ENCODE measurements at regions of chr2 and their contacts with region 1.

Region 1: GRCh38 chr2:119366649-119367471 is at the starts of genes C2orf76 and DBI:
- DNase-seq: peak; percentile 97 to 98 (median 98)
- ATAC-seq: peak; percentile 99
- H3K4me3 ChIP-seq: peak within 1 kb of the TSS; percentile 75
- H3K27ac ChIP-seq: peak within 1 kb of the TSS; percentile 80
- H3K4me1 ChIP-seq: peaks cover 3 to 14% of the 10 kb centered on the region in 2 experiments; a peak in 4 of 5 replicates
- H3K27me3 ChIP-seq: no peaks in the 10 kb centered on the region
- CTCF ChIP-seq: no peak
- EP300 ChIP-seq: no peak; the same call in 1 of the 2 replicates
- POLR2A ChIP-seq: peak; percentile 91
- RAD21 ChIP-seq: no peak
- polyA plus RNA-seq, gene C2orf76: 26.1 to 26.2 TPM
- polyA plus RNA-seq, gene DBI: 406 to 443 TPM

Region 2: DNA sequence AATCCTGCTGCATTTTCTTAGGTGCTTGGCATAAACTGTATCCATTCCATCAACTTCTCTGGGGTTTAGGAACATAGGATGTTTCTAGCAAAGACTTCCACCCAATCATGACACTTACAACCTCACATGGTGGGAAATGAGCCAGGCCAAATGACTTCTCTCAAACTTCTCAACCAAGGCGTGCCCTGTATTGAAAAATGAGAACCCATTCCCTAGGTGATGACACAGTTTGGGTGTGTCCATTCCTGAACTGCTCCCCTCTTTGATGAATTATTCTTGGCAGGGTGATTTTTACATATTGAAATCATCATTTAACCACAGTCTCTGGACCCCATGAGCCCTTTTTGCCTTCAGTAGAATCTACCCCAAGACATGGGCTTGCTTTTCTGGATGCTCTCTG is 680.5 kb before region 1 on chr2:
- CTCF ChIA-PET with region 1: no interaction called
- POLR2A ChIA-PET with region 1: no interaction called
- in situ Hi-C with region 1: no loop called
- intact Hi-C with region 1: no loop called
- DNase-seq: no peak
- ATAC-seq: no peak
- H3K4me3 ChIP-seq: no peak overlapping the region
- H3K27ac ChIP-seq: no peak overlapping the region
- H3K4me1 ChIP-seq: no peaks in the 10 kb centered on the region
- H3K27me3 ChIP-seq: no peaks in the 10 kb centered on the region
- CTCF ChIP-seq: no peak
- EP300 ChIP-seq: no peak
- POLR2A ChIP-seq: no peak
- RAD21 ChIP-seq: no peak

Region 3: DNA sequence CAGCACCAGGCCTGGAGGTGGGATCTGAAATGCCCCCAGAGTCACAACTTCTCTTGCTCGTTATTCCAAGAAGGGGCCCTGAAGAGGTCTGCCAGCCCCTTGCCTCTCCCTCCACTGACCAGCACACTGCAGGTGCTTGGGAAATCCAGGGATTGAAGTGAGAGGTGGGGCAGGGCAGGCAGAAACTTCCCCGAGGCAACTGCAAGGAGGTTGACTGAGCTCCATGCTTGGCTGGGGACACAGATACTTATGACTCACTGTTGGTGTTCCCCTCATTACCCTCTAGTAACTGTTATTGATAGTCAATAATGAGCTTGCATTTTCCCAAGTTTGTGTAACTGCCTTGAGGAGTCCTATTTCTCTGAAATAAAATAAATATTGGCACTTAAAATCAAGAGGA is 377.4 kb before region 1 on chr2:
- CTCF ChIA-PET with region 1: no interaction called
- POLR2A ChIA-PET with region 1: no interaction called
- in situ Hi-C with region 1: no loop called
- intact Hi-C with region 1: no loop called
- DNase-seq: no peak
- ATAC-seq: no peak
- H3K4me3 ChIP-seq: no peak overlapping the region
- H3K27ac ChIP-seq: no peak overlapping the region
- H3K4me1 ChIP-seq: no peaks in the 10 kb centered on the region
- H3K27me3 ChIP-seq: peaks cover 0 to 28% of the 10 kb centered on the region in 2 experiments; a peak in 2 of 5 replicates
- CTCF ChIP-seq: no peak
- EP300 ChIP-seq: no peak
- POLR2A ChIP-seq: no peak
- RAD21 ChIP-seq: no peak

Region 4: DNA sequence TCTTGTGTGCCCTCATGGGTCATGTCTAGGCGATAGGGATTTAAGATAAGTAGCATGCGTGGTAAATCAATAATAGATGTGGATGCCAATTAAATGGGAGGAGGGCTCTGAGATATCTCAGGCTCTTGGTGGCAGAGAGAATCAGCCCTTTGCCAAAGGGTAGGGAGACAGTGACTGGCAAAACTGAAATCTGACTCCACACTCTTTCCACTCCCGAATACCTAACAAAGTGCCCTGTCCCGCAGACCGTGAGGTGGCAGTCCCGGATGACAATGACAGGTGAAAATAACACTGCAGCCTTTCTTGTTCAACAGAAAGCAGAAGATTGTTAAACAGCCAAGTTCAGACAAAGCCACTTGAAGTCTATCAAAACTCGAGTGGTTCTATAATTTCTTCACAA is 47.3 kb before region 1 on chr2:
- CTCF ChIA-PET with region 1: no interaction called
- POLR2A ChIA-PET with region 1: no interaction called
- in situ Hi-C with region 1: no loop called
- intact Hi-C with region 1: loop called (anchors 2 kb)
- DNase-seq: no peak
- ATAC-seq: no peak
- H3K4me3 ChIP-seq: no peak overlapping the region
- H3K27ac ChIP-seq: no peak overlapping the region
- H3K4me1 ChIP-seq: no peaks in the 10 kb centered on the region; a peak in 1 of 5 replicates
- H3K27me3 ChIP-seq: no peaks in the 10 kb centered on the region
- CTCF ChIP-seq: no peak
- EP300 ChIP-seq: no peak
- POLR2A ChIP-seq: no peak
- RAD21 ChIP-seq: no peak

Region 5: DNA sequence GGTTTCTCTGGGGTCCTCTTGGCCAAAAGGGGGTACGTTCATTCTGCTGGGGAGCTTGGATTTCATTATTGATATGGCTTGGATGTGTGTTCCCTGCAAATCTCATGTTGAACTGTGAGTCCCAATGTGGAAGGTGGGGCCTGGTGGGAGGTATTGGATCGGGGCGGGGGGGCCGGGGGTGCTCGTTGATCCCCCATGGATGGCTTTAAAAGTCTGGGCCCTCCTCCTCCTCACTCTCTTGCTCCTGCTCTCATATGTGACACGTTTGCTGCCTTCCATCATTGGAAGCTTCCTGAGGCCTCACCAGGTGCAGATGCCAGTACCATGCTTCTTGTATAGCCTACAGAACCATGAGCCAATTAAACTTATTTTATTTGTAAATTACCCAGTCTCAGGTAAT is 11.7 kb after region 1 on chr2:
- CTCF ChIA-PET with region 1: no interaction called
- POLR2A ChIA-PET with region 1: interaction called, 11 read pairs
- in situ Hi-C with region 1: no loop called
- intact Hi-C with region 1: no loop called
- DNase-seq: no peak
- ATAC-seq: no peak
- H3K4me3 ChIP-seq: no peak overlapping the region
- H3K27ac ChIP-seq: no peak overlapping the region
- H3K4me1 ChIP-seq: peaks cover 0 to 2% of the 10 kb centered on the region in 2 experiments; a peak in 3 of 5 replicates
- H3K27me3 ChIP-seq: peaks cover 4 to 16% of the 10 kb centered on the region in 2 experiments; a peak in 3 of 5 replicates
- CTCF ChIP-seq: no peak
- EP300 ChIP-seq: no peak
- POLR2A ChIP-seq: no peak
- RAD21 ChIP-seq: no peak

Region 6: DNA sequence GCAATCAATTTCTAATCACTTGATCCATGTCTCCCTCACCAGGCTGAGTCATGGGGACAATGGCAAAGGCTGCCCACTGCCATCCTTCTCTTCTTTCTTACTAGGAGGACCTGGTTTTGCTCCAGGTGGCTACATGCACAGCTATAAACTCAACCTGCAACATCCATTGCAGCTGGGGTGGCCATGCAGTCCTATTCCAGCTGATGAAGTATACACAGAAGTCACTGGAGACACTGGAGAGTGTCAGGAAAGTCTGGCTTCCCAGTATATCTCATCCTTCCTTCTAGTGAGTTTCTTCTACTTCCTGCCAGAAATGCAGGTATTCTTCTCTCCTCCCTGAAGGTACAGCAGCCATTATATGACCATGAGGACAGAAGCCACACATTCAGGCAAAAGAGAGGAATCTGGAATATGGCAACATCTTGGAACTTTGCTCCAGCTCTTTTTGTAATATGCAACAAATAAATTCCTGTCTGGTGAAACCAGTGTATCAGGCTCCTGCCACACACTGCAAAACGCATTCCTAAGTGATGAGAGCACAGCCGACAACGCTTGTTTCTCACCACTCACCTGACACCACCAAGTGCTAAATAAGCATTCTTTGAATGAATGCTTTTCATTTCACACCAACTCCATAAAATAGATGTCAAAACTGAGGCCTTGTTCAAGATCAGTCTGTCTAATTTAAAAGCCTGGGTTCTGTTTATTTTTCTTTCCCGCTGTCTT is 125.1 kb after region 1 on chr2:
- CTCF ChIA-PET with region 1: no interaction called
- POLR2A ChIA-PET with region 1: no interaction called
- in situ Hi-C with region 1: no loop called
- intact Hi-C with region 1: no loop called
- DNase-seq: no peak
- ATAC-seq: no peak
- H3K4me3 ChIP-seq: no peak overlapping the region
- H3K27ac ChIP-seq: no peak overlapping the region
- H3K4me1 ChIP-seq: no peaks in the 10 kb centered on the region; a peak in 1 of 5 replicates
- H3K27me3 ChIP-seq: peaks cover 7 to 56% of the 10 kb centered on the region in 2 experiments
- CTCF ChIP-seq: no peak
- EP300 ChIP-seq: no peak
- POLR2A ChIP-seq: no peak
- RAD21 ChIP-seq: no peak

Region 7: DNA sequence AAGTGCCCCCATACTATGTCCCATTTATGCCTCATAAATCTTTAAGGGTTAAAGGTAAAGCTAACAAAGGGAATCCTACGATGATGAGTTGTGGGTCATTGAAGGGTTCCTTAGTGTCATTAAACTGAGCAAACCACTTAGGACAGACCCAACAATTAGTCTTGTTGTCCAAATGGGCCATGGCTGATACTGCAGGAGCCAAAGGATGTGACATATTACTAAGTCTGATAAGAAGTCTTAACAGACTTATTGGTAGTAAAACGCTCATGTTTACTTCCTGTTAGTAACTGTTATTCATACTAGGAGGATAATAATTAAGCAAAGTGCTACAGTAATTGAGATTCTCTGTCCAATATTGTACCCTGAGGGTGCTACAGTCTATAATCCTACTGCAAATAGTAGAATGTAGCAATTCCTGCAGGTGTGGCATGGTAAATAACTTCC is 489.6 kb after region 1 on chr2:
- CTCF ChIA-PET with region 1: no interaction called
- POLR2A ChIA-PET with region 1: no interaction called
- in situ Hi-C with region 1: no loop called
- intact Hi-C with region 1: no loop called
- DNase-seq: peak in 2 of 4 experiments; percentile 23 to 60
- ATAC-seq: peak; percentile 76
- H3K4me3 ChIP-seq: no peak overlapping the region
- H3K27ac ChIP-seq: peak overlapping the region; percentile 74
- H3K4me1 ChIP-seq: peaks cover 0 to 18% of the 10 kb centered on the region in 2 experiments; a peak in 4 of 5 replicates
- H3K27me3 ChIP-seq: no peaks in the 10 kb centered on the region
- CTCF ChIP-seq: no peak
- EP300 ChIP-seq: peak; percentile 75; the same call in 1 of the 2 replicates
- POLR2A ChIP-seq: no peak
- RAD21 ChIP-seq: no peak